ENCODE measurements at regions of chrX and their contacts with region 1.

Region 1: GRCh38 chrX:17072721-17073230 is 126.3 kb downstream of the REPS2 start:
- DNase-seq: no peak
- H3K4me3 ChIP-seq: no peak overlapping the region
- H3K27ac ChIP-seq: no peak overlapping the region
- H3K27me3 ChIP-seq: no peaks in the 10 kb centered on the region
- CTCF ChIP-seq: no peak

Region 2: DNA sequence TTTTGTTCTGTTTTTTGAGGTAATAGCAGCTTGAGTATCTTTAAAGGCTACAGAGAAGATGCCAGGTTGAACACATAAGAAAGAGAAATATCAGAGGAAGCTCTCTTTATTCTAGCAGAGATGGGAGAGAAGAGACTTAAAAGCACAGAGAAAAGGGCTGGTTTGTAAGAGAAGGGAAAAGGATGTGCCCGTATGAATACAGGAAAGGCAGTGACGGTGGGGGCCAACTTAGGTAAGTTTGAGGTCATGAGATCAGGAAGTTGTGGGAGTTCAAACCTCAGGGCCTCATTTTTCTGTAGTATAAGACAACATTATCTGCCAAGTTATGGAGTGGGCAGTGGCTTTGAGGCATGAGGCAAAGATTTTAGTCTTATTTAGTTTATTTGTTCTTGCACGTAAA is 544.2 kb before region 1 on chrX:
- CTCF ChIA-PET with region 1: no interaction called
- POLR2A ChIA-PET with region 1: no interaction called
- DNase-seq: no peak
- H3K4me3 ChIP-seq: no peak overlapping the region
- H3K27ac ChIP-seq: no peak overlapping the region
- H3K27me3 ChIP-seq: no peaks in the 10 kb centered on the region
- CTCF ChIP-seq: no peak

Region 3: DNA sequence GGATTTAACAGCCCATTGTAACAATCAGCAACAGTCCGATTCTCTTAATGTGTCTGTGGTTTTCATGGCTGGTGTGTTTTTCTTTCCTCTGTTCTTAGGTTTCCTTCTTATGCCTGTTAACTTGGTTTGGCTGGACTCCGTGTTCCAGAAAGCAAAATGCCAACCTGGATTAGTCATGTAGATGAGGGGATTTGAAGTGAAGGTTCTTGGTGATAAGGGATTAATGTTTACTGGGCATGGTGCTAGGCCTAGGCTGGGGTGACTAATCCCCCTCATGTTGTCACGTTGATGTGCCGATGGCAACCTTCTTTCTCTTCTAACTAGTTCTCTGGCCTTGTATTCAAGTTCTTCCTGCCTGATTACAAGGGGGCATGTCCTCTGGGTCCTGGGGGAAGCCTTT is 40.4 kb before region 1 on chrX:
- CTCF ChIA-PET with region 1: no interaction called
- POLR2A ChIA-PET with region 1: interaction called, 14 read pairs
- DNase-seq: no peak
- H3K4me3 ChIP-seq: no peak overlapping the region
- H3K27ac ChIP-seq: no peak overlapping the region
- H3K27me3 ChIP-seq: no peaks in the 10 kb centered on the region
- CTCF ChIP-seq: no peak

Measured in AG04450 (cell line).